Colonic mucosa (tissue), 4 donors: ENCODE measurements at regions of chr3 and their contacts with region 1.

Region 1: GRCh38 chr3:129132097-129132866 is 10.7 kb upstream of the RAB43 start:
- DNase-seq: no peak
- H3K4me3 ChIP-seq: no peak overlapping the region
- H3K27ac ChIP-seq: no peak overlapping the region
- H3K4me1 ChIP-seq: no peaks in the 10 kb centered on the region
- H3K27me3 ChIP-seq: no peaks in the 10 kb centered on the region
- CTCF ChIP-seq: no peak

Region 2: GRCh38 chr3:128907706-128908445 is 224.4 kb before region 1 on chr3:
- intact Hi-C with region 1: loop called (anchors 10 kb)
- DNase-seq: no peak
- H3K4me3 ChIP-seq: no peak overlapping the region
- H3K27ac ChIP-seq: no peak overlapping the region
- H3K4me1 ChIP-seq: no peaks in the 10 kb centered on the region
- H3K27me3 ChIP-seq: no peaks in the 10 kb centered on the region
- CTCF ChIP-seq: no peak

Region 3: DNA sequence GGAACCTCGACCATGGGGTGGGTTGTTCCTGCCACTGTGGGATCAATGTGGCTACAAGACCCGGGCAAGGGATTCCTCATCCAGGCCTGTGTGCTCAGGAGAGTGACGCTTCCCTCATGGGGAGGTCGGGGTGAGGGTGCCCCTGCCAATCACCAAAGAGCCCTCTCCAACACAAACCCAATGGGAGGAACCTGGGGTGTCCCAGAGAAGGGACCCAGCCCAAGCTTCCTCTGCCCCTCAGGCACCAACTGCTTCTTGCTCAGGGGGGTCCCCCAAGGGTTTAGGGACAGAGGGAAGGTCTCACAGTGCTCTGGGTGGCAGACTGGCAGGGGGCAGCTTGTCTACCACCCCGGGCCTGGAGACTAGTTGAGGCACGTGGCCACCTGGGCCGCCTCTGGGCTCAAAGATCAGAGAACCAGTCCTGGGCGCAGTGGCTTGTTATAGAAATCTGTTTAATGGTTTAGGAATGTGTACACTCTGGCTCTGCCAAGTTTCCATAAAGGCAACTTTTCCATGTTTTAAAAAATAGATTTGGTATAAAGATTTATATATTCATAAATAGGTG is 45.1 kb before region 1 on chr3:
- intact Hi-C with region 1: no loop called
- DNase-seq: no peak
- H3K4me3 ChIP-seq: no peak overlapping the region
- H3K27ac ChIP-seq: no peak overlapping the region
- H3K4me1 ChIP-seq: no peaks in the 10 kb centered on the region
- H3K27me3 ChIP-seq: no peaks in the 10 kb centered on the region
- CTCF ChIP-seq: no peak

Region 4: GRCh38 chr3:129413687-129414506 is 281.6 kb after region 1 on chr3:
- intact Hi-C with region 1: no loop called
- DNase-seq: no peak
- H3K4me3 ChIP-seq: no peak overlapping the region
- H3K27ac ChIP-seq: no peak overlapping the region
- H3K4me1 ChIP-seq: no peaks in the 10 kb centered on the region
- H3K27me3 ChIP-seq: no peaks in the 10 kb centered on the region
- CTCF ChIP-seq: no peak